Endothelial cell of umbilical vein (primary cell): ENCODE measurements at regions of chr9 and their contacts with region 1.

Region 1: DNA sequence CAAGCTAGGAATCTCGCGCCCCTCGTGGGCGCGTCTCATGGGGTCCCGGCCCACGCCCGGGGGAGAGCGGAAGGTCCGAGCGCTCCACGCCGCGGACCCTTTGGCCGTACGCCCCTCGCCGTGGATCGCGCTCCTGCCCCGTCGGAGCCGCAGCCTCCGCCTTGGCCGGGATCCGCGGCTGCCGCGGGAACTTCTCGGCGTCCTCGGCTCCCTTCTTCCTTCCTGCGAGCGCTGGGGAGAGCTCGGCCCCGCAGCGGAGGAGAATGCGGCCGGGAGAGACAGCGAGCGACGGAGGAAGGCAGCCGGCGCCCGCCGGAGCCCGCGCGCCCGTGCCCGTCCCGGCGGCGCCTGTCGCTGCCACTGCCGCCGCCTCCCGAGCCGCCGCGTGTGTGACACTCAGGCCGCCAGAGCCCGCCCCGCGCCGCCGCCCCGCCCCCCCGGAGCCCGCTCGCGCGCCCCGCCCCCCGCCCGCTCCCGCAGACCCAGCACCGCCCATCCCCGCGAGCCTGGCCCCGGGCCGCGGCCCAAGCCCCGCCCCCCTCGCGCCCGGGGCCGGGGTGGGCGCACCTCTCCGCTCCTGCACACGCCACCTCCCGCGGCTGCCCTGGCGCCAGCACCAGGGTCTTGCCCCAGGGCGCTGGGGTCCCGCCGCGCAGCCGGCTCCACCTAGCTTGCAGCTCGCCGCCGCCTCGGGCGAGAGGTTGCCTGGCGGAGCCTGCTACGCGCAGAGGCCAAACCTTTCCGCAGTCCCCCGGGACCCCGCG is at the start of gene SHB:
- DNase-seq: peak; percentile 63
- H3K4me3 ChIP-seq: peak within 1 kb of the TSS; percentile 63 to 76 (median 71)
- H3K27ac ChIP-seq: peak within 1 kb of the TSS; percentile 92
- H3K4me1 ChIP-seq: peaks cover 47% of the 10 kb centered on the region
- H3K27me3 ChIP-seq: no peaks in the 10 kb centered on the region
- CTCF ChIP-seq: peak in 1 of 2 donors; percentile 0
- POLR2A ChIP-seq: peak; percentile 84
- total RNA-seq, gene SHB: 22.3 and 24.9 TPM in 2 replicates

Region 2: GRCh38 chr9:36728651-36729520 is 1340.2 kb before region 1 on chr9:
- CTCF ChIA-PET with region 1: no interaction called
- POLR2A ChIA-PET with region 1: no interaction called
- dilution Hi-C with region 1: no loop called
- intact Hi-C with region 1: no loop called
- DNase-seq: peak; percentile 85
- H3K4me3 ChIP-seq: no peak overlapping the region
- H3K27ac ChIP-seq: no peak overlapping the region
- H3K4me1 ChIP-seq: no peaks in the 10 kb centered on the region
- H3K27me3 ChIP-seq: no peaks in the 10 kb centered on the region
- CTCF ChIP-seq: peak; percentile 90 to 94
- POLR2A ChIP-seq: no peak

Region 3: GRCh38 chr9:37953775-37954437 is 115.1 kb before region 1 on chr9:
- CTCF ChIA-PET with region 1: no interaction called
- POLR2A ChIA-PET with region 1: no interaction called
- dilution Hi-C with region 1: no loop called
- intact Hi-C with region 1: loop called (anchors 1 kb)
- DNase-seq: peak; percentile 97
- H3K4me3 ChIP-seq: no peak overlapping the region
- H3K27ac ChIP-seq: peak overlapping the region; percentile 71
- H3K4me1 ChIP-seq: peaks cover 21% of the 10 kb centered on the region
- H3K27me3 ChIP-seq: no peaks in the 10 kb centered on the region
- CTCF ChIP-seq: no peak
- POLR2A ChIP-seq: peak; percentile 46

Region 4: DNA sequence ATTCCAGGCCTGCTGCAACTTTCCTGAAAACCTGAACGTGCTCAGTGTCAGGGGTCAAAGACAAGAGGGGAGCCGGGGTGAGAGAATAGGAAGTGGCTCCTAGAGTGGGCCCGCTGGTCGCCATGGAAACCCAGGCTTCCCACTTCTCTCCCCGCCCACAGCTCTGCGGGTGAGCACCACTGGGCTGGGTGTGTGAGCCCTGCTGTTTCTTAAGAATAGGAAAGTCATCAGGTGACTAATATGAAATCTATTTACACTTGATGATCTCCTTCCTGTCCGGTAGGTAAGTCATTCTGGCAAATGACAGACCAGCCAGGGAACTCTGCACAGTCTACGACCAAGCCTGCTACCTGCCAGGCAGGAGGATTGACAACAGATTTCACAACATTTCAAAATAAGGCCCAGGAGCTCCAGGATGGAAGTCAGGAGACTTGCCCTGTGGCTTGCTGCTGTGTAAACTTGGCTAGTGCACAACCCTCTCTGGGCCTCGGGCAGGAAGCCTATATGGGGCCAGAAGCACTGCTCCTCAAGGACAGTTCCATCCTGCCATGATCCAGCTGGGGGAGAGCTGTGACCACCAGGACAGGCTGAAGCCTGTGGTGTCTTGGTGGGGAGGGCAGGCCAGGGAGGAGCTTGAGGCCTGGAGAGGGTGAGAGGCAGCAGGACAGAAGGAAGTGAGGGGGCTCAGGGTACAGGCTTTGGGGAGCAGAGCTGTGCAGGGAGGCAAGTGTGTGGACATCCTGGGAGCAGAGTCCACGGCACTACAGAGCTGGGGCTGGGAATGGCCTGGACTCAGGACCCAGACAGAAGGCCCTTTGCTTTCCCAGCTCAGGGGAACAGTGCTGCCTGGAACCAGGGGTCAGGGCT is 60.6 kb before region 1 on chr9:
- CTCF ChIA-PET with region 1: interaction called, 6 read pairs
- POLR2A ChIA-PET with region 1: no interaction called
- dilution Hi-C with region 1: no loop called
- intact Hi-C with region 1: loop called (anchors 2 kb)
- DNase-seq: peak; percentile 80
- H3K4me3 ChIP-seq: no peak overlapping the region
- H3K27ac ChIP-seq: peak overlapping the region; percentile 79
- H3K4me1 ChIP-seq: peaks cover 30% of the 10 kb centered on the region
- H3K27me3 ChIP-seq: no peaks in the 10 kb centered on the region
- CTCF ChIP-seq: no peak
- POLR2A ChIP-seq: no peak

Region 5: GRCh38 chr9:38026021-38026809 is 42.8 kb before region 1 on chr9:
- CTCF ChIA-PET with region 1: interaction called, 23 read pairs
- POLR2A ChIA-PET with region 1: no interaction called
- dilution Hi-C with region 1: no loop called
- intact Hi-C with region 1: loop called (anchors 1 kb)
- DNase-seq: peak; percentile 98
- H3K4me3 ChIP-seq: no peak overlapping the region
- H3K27ac ChIP-seq: peak overlapping the region; percentile 97
- H3K4me1 ChIP-seq: peaks cover 35% of the 10 kb centered on the region
- H3K27me3 ChIP-seq: no peaks in the 10 kb centered on the region
- CTCF ChIP-seq: no peak
- POLR2A ChIP-seq: no peak

Region 6: DNA sequence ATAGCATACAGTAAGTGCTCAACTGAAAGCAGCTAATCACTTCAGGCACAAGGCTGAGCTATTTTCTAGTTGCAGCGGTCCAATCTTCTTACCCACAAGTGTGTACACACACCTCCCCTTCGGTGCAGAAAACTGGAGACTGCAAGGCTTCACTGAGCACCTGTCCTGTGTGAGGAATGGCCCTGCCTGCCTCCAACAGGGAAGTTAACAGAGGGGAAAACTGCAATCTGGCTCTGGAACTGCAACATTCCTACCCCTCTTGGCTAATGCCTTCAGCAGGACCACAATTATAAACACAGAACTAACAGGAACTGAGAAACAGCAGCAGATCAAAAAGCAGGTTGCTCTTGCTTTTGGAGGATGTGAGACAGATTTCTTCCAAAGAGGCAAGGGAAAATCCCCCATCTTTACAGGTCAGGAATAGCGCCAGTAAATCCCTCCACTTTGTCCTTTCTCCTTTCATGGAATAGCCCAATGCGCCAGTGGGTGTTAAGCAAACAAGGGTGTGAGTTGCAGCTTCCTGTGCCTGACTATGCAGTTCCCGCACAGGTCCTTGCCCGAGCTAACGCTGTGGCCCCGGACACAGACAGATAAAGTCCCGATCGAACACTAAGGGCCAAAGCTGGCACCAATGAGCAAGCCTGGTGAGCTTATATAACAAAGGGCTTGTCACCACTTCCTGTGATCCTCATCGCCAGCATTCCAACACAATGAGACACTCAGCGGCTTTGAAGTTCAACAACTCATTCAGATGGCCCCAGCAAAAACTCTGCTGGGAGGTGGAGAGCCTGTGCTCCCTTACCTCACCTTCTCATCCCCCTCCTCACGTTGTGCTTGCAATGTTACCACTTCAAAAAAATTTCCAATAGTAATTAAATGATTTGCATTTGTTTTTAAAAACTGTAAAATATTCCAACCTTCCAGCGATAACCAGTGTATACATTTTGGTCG is 21.5 kb before region 1 on chr9:
- CTCF ChIA-PET with region 1: interaction called, 5 read pairs
- POLR2A ChIA-PET with region 1: interaction called, 7 read pairs
- dilution Hi-C with region 1: no loop called
- intact Hi-C with region 1: loop called (anchors 1 kb)
- DNase-seq: peak; percentile 90
- H3K4me3 ChIP-seq: peak overlapping the region in 1 of 3 experiments; percentile 38
- H3K27ac ChIP-seq: peak overlapping the region; percentile 96
- H3K4me1 ChIP-seq: peaks cover 30% of the 10 kb centered on the region
- H3K27me3 ChIP-seq: no peaks in the 10 kb centered on the region
- CTCF ChIP-seq: no peak
- POLR2A ChIP-seq: peak; percentile 34